Aorta (tissue), 5 donors: ENCODE measurements at regions of chr20 and their contacts with region 1.

Region 1: GRCh38 chr20:62937366-62938104 is 412 bp upstream of the GID8 start:
- DNase-seq: peak; percentile 98 to 99
- ATAC-seq: peak; percentile 98
- H3K4me3 ChIP-seq: peak overlapping the region; percentile 71
- H3K27ac ChIP-seq: peak overlapping the region; percentile 24 to 45
- H3K4me1 ChIP-seq: peaks cover 1 to 5% of the 10 kb centered on the region in 2 donors
- H3K27me3 ChIP-seq: no peaks in the 10 kb centered on the region

Region 2: DNA sequence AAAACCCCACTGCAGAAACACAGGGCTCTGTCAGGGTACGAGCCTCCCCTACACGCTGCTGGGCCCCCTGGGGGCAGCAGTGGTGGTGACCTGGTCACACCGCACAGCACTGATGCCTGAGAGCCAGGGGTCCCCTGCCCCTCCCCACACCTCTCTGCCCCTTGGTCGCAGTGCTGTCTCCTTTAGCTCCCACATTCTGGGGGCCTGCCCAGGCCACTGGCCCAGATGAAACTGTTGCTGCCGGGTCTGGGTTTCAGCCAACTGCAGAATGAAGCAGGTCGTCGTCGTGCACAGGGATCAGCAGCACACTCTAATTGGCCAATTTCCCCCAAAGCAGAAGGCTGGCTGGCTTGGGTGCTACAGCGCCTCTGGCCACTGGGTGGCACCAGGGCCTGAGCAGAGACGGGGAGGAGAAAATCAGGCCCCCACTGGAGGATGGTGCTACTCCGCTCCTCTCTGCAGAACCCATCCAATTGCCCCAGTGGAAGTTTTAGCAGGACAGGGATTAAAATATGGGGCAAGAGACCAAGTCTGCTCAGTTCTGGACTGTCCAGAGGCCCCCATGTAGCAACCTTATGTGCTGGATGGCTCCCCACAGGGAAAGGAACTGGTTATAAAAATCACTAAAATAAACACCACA is 37.4 kb before region 1 on chr20:
- intact Hi-C with region 1: loop called in 1 of 2 experiments (anchors 5 kb)
- DNase-seq: peak; percentile 80 to 87
- ATAC-seq: peak; percentile 93
- H3K4me3 ChIP-seq: no peak overlapping the region
- H3K27ac ChIP-seq: no peak overlapping the region
- H3K4me1 ChIP-seq: no peaks in the 10 kb centered on the region
- H3K27me3 ChIP-seq: no peaks in the 10 kb centered on the region

Region 3: DNA sequence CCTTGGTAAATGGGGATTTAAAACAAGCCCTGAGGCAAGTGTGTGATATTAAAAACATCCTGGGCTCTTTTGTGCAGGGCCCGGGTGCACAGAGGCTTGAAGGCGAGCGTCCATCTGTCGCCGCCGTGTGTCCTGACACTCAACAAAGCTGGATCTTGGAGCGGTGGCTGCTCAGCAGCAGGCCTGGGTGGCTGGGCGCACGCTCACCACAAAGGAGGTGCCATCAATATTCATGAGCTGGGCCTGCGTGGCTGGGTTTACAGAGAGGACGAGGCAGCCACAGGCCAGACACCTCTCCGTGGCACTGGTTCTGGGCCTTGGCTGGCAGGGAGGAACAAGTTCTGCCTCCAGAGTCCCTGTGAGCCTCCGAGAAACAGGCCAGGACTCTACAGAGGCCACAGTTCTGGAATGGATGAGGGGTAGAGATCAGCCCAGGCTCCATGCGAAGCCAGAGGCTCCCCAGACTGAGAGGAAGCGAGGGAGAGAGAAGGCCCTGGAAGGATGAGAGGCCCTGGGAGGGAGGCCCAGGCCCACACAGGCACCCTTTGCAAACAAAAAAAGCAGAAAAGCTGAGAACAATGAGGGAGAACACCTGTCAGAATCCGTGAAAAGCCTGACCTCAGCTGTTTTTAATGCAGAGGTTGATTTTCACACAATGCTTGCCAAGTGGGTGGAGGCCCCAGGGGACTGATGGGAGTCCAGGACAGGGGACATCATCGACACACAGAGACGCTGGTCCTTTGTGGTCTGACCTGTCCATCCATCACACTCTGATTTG is 47.3 kb after region 1 on chr20:
- intact Hi-C with region 1: no loop called
- DNase-seq: no peak
- ATAC-seq: no peak
- H3K4me3 ChIP-seq: no peak overlapping the region
- H3K27ac ChIP-seq: no peak overlapping the region
- H3K4me1 ChIP-seq: no peaks in the 10 kb centered on the region
- H3K27me3 ChIP-seq: no peaks in the 10 kb centered on the region